ENCODE measurements at regions of chr2 and their contacts with region 1.

Region 1: GRCh38 chr2:75646583-75647425 is at the start of gene MRPL19:
- DNase-seq: peak; percentile 90 to 91
- H3K4me3 ChIP-seq: peak within 1 kb of the TSS; percentile 83
- H3K4me3 Mint-ChIP-seq: peak within 1 kb of the TSS; percentile 76
- H3K27ac Mint-ChIP-seq: peak within 1 kb of the TSS; percentile 86
- H3K4me1 ChIP-seq: peaks cover 4% of the 10 kb centered on the region; the same call in 1 of the 2 replicates
- H3K4me1 Mint-ChIP-seq: peaks cover 6% of the 10 kb centered on the region
- H3K27me3 ChIP-seq: no peaks in the 10 kb centered on the region
- H3K27me3 Mint-ChIP-seq: no peaks in the 10 kb centered on the region
- CTCF ChIP-seq: no peak
- total RNA-seq, gene MRPL19: 57.8 and 64.8 TPM in 2 replicates

Region 2: GRCh38 chr2:75710577-75711253 is 63.9 kb after region 1 on chr2 and contains the start of gene GCFC2:
- CTCF ChIA-PET with region 1: no interaction called
- POLR2A ChIA-PET with region 1: interaction called, 4 read pairs
- intact Hi-C with region 1: loop called (anchors 2 kb)
- DNase-seq: peak; percentile 88 to 93
- H3K4me3 ChIP-seq: peak within 1 kb of the TSS; percentile 69
- H3K4me3 Mint-ChIP-seq: peak within 1 kb of the TSS; percentile 74
- H3K27ac Mint-ChIP-seq: peak within 1 kb of the TSS; percentile 94
- H3K4me1 ChIP-seq: peaks cover 7% of the 10 kb centered on the region; the same call in 1 of the 2 replicates
- H3K4me1 Mint-ChIP-seq: peaks cover 15% of the 10 kb centered on the region
- H3K27me3 ChIP-seq: no peaks in the 10 kb centered on the region
- H3K27me3 Mint-ChIP-seq: peaks cover 6% of the 10 kb centered on the region
- CTCF ChIP-seq: peak; percentile 28 to 43
- total RNA-seq, gene GCFC2: 22.5 and 26.4 TPM in 2 replicates

Measured in Caco-2 (cell line).